Right ventricle myocardium inferior (tissue), 1 donor: ENCODE measurements at regions of chr19 and their contacts with region 1.

Region 1: DNA sequence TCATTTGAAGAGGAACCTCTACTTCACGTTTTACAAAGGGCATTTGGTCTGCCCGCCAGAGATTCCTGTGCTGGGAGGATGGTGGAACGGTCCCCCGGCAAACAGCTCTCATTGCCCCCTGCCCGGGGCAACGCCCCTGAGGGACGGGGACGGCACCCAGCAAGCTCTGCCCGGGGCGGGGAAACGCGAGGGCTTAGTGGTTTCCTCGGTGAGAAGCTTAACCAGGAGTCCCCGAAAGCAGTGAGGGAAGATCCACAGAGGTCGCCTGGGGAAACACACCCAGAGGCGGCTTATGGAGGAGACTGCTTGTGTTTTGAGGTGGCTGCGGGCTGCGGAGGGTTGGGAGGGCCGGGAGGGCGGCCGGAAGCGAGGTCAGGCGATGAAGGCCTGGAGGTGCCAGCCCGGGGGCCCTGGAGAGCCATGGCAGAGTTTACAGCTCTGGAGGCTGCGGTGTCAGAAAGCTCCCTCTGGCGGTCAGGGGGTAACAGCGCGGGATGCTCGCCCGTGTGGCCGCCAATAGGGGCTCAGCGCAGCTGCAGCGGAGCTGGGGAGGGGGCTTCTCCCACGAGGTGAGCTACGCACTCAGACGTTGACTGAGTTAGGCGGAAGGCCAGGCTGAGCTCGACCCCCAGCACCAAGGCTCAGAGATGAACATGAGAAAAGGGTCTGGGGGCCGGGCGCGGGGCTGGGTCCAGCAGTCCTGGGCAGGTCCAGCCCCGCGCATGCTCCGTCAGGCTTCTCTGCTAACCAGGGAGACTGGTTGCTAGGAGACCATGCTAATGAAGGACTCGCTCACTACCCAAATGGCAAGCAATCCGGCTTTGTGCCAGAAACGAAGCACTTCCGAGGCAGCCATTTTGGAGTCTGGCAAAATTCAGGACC is 652 bp upstream of the TPGS1 start:
- DNase-seq: peak; percentile 99
- ATAC-seq: peak; percentile 94

Region 2: DNA sequence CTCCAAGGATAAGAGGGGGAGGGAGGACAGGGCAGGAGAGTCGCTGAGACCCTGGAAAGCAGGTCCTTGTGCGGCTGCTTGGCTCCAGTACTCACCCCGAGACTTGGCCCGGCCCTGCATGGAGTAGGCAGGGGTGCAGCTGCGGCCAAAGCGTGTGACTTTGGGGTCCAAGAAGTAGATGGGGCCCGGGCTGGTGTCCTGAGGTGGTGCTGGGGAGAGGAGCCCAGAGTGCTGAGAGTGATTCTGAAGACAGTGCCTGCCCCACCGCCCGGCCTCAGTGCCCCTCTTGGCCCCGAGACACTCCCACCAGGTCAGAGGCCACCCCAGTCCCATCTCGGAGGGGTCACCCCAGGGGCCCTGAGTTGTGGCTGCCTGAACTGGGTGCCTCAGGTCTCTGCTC is 39.1 kb before region 1 on chr19:
- intact Hi-C with region 1: no loop called
- DNase-seq: no peak
- ATAC-seq: no peak

Region 3: DNA sequence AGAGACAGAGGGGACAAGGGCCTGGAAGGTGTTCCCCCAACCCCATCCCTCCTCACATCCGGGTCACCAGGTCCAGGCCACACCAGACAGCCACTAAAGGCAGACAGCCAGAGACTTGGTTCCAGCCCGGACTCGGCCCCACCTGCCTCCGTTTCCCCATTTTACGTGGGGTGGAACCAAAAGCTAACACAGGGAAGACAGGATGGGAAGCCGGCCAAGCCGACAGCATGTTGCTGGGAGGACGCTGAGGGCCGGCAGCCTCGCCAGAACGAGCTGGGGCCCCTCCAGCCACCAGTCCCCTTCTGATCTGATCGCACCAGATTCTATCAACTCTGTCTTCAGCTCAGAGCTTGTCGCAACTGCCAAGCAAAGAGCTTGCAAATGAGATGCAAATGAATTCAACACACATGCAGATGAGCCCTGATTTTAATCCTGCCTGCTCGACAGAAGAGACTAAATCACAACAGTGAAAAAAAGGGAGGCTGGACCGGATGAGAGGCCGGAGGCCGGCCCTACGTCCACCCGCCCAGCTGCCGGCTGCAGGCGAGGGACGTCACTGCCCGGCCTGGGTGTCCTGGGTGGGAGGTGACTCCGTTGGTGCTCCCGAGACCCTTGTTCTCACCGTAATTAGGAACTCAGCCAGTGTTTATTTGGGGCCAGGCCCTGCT is 28.3 kb before region 1 on chr19:
- intact Hi-C with region 1: no loop called
- DNase-seq: no peak
- ATAC-seq: no peak

Region 4: GRCh38 chr19:488505-489417 is 17.9 kb before region 1 on chr19:
- intact Hi-C with region 1: loop called (anchors 1 kb)
- DNase-seq: peak; percentile 100
- ATAC-seq: peak; percentile 97

Region 5: GRCh38 chr19:531009-531752 is 24.5 kb after region 1 on chr19:
- intact Hi-C with region 1: loop called (anchors 2 kb)
- DNase-seq: peak; percentile 93
- ATAC-seq: peak; percentile 84